ENCODE measurements at regions of chr4 and their contacts with region 1.

Region 1: DNA sequence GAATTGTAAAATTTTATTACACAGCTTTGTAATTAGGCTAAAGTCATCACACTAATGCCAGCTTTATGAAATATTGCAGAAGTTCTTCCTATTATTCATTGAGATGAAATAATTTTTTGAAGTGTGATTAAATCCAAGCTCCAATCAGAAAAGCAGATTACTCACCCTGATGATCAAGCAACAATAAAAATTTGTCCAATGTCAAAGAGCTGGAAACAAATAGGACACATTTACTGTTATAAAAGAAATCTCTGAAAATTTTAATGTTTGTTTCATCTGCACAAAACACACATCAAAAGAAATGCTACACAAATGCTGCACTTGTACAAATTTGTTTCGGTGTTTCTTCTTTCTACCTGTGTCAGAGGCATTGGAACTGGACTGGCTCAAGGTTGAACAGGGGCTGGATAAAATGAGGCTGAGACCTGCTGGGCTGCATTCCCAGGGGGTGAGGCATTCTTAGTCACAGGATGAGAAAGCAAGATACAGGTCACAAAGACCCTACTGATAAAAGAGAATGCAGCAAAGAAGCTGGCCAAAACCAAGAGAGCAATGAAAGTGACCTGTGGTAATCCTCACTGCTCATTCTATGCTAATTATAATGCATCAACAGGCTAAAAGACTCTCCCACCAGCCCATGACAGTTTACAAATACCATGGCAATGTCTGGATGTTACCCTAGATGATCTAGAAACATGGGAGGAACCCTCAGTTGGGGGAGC is 78.3 kb downstream of the GASK1B start:
- DNase-seq: peak; percentile 90 to 92
- H3K4me3 ChIP-seq: peak overlapping the region; percentile 44; the same call in 1 of the 2 replicates
- H3K27ac ChIP-seq: peak overlapping the region; percentile 94
- H3K4me1 ChIP-seq: peaks cover 36% of the 10 kb centered on the region
- H3K27me3 ChIP-seq: no peaks in the 10 kb centered on the region
- CTCF ChIP-seq: no peak

Region 2: DNA sequence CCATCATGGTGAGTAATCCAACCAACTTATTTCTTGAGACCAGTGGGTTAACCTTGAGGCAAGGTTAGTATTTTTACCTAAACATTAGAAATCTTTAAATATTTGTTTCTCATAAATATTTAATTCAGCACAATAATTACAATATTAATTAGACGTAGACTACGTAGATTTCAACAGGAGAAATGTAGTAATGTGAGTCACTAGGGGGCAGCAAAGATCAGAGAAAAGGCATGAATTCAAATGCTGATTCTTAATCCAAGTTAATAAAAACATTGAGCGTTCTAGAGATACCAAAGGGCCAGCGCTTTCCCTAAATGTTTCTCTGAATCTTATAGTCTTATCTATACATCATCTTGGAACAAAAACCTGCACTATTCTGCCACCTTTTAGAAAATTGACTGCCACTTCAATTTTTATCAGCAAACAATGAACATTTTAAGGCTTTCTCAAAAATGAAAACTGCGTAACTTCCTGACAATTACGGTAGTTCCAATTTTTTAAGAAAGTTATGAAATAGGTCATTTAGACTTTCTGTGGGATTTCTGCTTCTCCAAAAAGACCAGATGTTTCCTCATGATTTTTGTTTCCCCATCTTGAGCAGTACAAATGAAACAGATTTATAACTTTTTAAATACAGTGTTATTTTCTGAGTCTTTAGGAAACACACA is 102.4 kb before region 1 on chr4:
- CTCF ChIA-PET with region 1: no interaction called
- POLR2A ChIA-PET with region 1: no interaction called
- intact Hi-C with region 1: loop called (anchors 1 kb)
- DNase-seq: peak in 1 of 2 experiments; percentile 30
- H3K4me3 ChIP-seq: no peak overlapping the region
- H3K27ac ChIP-seq: no peak overlapping the region
- H3K4me1 ChIP-seq: peaks cover 9% of the 10 kb centered on the region
- H3K27me3 ChIP-seq: no peaks in the 10 kb centered on the region
- CTCF ChIP-seq: peak; percentile 84

Region 3: DNA sequence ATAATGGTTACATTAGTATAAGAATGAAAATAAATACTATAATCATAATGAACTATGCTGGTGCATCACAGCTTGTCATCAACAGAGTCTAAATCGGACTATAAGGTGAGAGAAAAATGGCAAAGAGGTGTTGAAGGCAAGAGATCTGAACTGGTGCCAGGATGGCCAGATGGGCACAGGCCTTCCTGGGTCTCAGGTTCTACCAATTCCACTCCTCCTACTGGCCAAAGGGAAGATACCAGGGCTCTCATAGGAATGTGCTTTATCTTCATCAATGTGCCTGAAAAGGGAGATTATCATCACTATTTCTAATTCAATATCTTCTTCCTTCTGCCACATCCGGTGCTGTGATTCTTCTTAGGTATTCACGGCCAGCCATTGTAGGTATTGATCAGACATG is 29.4 kb before region 1 on chr4:
- CTCF ChIA-PET with region 1: no interaction called
- POLR2A ChIA-PET with region 1: interaction called, 3 read pairs
- intact Hi-C with region 1: loop called (anchors 1 kb)
- DNase-seq: no peak
- H3K4me3 ChIP-seq: no peak overlapping the region
- H3K27ac ChIP-seq: no peak overlapping the region
- H3K4me1 ChIP-seq: no peaks in the 10 kb centered on the region
- H3K27me3 ChIP-seq: no peaks in the 10 kb centered on the region
- CTCF ChIP-seq: no peak

Region 4: DNA sequence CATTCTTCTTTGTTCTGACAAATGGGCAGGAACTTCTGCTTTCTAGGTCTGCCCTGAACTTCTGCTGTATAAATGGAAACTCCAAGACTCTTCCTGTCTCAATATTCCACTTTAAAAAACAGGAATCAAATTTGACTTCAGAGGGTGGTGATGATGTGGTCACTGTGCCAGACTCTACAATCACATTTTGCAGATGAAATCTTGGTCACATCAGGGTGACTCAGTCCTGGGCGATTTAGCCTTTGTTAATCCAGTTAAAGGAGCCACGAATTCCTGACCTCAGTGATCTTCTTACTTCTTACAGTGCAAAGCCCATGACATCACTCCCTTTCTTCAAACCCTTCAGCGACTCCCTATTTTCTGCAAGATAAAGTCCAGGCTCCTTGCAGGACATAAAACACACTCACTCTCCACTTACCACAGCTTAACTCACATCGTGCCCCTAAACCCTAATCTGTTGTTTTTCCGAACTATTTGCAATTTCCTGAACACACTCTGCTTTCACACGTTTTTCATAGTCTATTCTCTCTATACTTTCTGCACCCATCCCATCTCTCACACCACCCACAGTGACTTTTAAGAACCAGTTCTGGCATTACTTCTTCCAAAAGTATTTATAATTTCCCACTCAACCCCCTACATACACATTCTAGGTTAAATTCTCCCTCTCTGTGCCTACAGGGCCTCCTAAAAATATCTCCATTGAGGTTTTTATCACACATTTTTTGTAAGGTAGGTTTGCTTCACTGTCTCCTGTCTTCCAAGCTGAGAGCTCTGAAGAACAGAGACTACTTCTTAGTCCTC is 67.2 kb after region 1 on chr4:
- CTCF ChIA-PET with region 1: no interaction called
- POLR2A ChIA-PET with region 1: no interaction called
- intact Hi-C with region 1: loop called (anchors 1 kb)
- DNase-seq: peak; percentile 60 to 66
- H3K4me3 ChIP-seq: no peak overlapping the region
- H3K27ac ChIP-seq: peak overlapping the region; percentile 66
- H3K4me1 ChIP-seq: peaks cover 8% of the 10 kb centered on the region
- H3K27me3 ChIP-seq: no peaks in the 10 kb centered on the region
- CTCF ChIP-seq: no peak

Region 5: GRCh38 chr4:158209825-158210807 is 115.5 kb after region 1 on chr4 and contains the start of gene TMEM144:
- CTCF ChIA-PET with region 1: no interaction called
- POLR2A ChIA-PET with region 1: no interaction called
- intact Hi-C with region 1: loop called (anchors 1 kb)
- DNase-seq: peak; percentile 87 to 94
- H3K4me3 ChIP-seq: peak within 1 kb of the TSS; percentile 76
- H3K27ac ChIP-seq: peak within 1 kb of the TSS; percentile 86
- H3K4me1 ChIP-seq: no peaks in the 10 kb centered on the region; the same call in 1 of the 2 replicates
- H3K27me3 ChIP-seq: no peaks in the 10 kb centered on the region
- CTCF ChIP-seq: no peak
- total RNA-seq, gene TMEM144: 9.2 and 13.4 TPM in 2 replicates